Upper lobe of right lung (tissue), 1 donor: ENCODE measurements at regions of chr9 and their contacts with region 1.

Region 1: GRCh38 chr9:129849901-129850300 is 14.6 kb downstream of the USP20 start:
- DNase-seq: no peak
- ATAC-seq: no peak
- H3K4me3 ChIP-seq: no peak overlapping the region
- H3K27ac ChIP-seq: no peak overlapping the region
- H3K4me1 ChIP-seq: no peaks in the 10 kb centered on the region
- H3K27me3 ChIP-seq: no peaks in the 10 kb centered on the region
- CTCF ChIP-seq: no peak

Region 2: GRCh38 chr9:129401628-129402370 is 448.1 kb before region 1 on chr9:
- intact Hi-C with region 1: loop called (anchors 5 kb)
- DNase-seq: no peak
- ATAC-seq: no peak
- H3K4me3 ChIP-seq: no peak overlapping the region
- H3K27ac ChIP-seq: no peak overlapping the region
- H3K4me1 ChIP-seq: no peaks in the 10 kb centered on the region
- H3K27me3 ChIP-seq: no peaks in the 10 kb centered on the region
- CTCF ChIP-seq: no peak

Region 3: DNA sequence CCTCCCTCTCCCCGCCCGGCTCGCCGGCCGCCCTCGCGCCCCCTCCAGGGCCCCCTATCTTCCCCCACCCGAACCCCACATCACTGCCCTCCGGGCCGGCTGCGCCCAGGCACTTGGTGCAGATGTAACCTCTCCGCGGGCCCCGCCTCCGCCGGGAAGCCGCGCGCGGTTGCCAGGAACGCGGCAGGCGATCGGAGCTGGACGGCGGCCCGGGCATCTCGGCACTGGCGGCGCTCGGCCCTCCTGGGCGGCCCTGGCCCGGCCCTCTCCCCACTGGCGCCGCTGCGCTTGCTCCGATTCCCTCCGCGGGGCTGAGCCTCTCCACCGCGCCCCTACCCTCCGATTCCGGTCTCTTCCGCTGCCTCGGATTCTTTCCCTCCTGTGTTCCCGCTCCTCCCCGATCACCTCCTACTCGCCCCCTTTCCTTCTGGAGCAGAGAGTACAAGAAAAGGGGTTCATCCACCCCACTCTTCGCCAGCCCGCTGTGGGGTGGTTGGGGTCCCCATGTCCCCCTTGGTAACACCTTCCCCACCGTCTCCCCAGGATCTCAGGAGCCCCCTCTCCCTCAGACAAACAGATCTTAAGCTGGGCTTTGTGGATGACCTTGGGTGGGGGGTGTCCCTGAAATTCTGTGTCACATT is 299.6 kb before region 1 on chr9:
- intact Hi-C with region 1: no loop called
- DNase-seq: peak; percentile 90
- ATAC-seq: peak; percentile 92
- H3K4me3 ChIP-seq: peak overlapping the region; percentile 49
- H3K27ac ChIP-seq: peak overlapping the region; percentile 82
- H3K4me1 ChIP-seq: peaks cover 9% of the 10 kb centered on the region
- H3K27me3 ChIP-seq: peaks cover 8% of the 10 kb centered on the region
- CTCF ChIP-seq: no peak

Region 4: DNA sequence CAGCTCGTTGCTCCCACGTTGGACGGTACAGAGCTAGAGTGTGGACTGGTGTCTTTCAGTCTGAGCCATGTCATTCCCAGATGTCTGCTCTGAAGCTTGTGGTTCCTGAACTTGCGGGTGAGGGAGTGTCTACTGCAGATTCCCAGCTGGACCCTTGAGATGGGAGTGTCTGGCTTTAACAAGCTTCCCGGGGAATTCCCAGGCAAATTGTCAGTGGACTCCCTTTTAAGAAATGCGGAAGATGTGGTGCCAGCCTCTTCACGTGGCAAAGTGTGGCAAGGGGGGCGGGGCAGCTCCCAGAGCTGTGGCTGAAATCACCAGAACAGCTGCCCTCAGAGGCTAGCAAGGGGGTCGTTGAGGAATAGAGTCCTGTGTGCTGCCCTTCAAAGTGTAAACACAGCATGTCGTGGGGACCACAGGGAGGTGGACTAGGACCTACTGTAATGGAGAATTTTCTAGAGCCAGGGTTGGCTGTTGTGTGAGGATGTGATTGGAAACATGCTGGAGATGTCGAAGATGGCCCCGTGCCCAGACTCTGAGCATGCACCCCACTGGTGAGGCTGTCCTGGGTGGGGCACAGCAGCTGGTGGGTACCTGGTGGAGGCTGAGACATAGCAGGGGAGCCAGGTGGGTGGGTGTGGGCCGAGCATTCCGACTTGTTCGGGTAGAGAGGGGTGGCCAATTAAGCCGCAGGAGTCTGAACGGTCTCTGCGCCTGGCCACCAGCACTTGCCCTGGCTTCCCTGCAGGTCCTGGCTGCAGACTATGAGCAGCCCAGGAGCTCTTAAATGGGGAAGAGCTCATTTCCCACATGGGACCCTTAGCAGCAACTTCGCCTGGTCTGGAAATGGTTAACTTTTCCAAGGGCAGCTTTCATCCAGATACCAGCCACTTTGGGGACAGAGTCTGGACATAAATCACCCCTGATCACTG is 147.0 kb before region 1 on chr9:
- intact Hi-C with region 1: no loop called
- DNase-seq: peak; percentile 79
- ATAC-seq: peak; percentile 79
- H3K4me3 ChIP-seq: no peak overlapping the region
- H3K27ac ChIP-seq: no peak overlapping the region
- H3K4me1 ChIP-seq: peaks cover 8% of the 10 kb centered on the region
- H3K27me3 ChIP-seq: peaks cover 3% of the 10 kb centered on the region
- CTCF ChIP-seq: no peak